ENCODE measurements at regions of chr9 and their contacts with region 1.

Region 1: GRCh38 chr9:131656356-131657036 is 83.4 kb downstream of the RAPGEF1 start:
- DNase-seq: peak; percentile 53 to 90 (median 71)
- ATAC-seq: peak; percentile 84
- H3K4me3 ChIP-seq: no peak overlapping the region
- H3K4me3 Mint-ChIP-seq: peak overlapping the region; percentile 46
- H3K27ac ChIP-seq: peak overlapping the region; percentile 16 to 73
- H3K27ac Mint-ChIP-seq: peak overlapping the region; percentile 96
- H3K4me1 ChIP-seq: peaks cover 33% of the 10 kb centered on the region
- H3K4me1 Mint-ChIP-seq: peaks cover 70% of the 10 kb centered on the region
- H3K27me3 ChIP-seq: no peaks in the 10 kb centered on the region
- H3K27me3 Mint-ChIP-seq: no peaks in the 10 kb centered on the region
- CTCF ChIP-seq: no peak

Region 2: GRCh38 chr9:131635285-131635684 is 21.2 kb before region 1 on chr9:
- CTCF ChIA-PET with region 1: interaction called, 3 read pairs
- POLR2A ChIA-PET with region 1: interaction called, 4 read pairs
- intact Hi-C with region 1: loop called in 1 of 2 experiments (anchors 1 kb)
- DNase-seq: peak; percentile 42 to 92 (median 76)
- ATAC-seq: peak; percentile 99
- H3K4me3 ChIP-seq: no peak overlapping the region
- H3K4me3 Mint-ChIP-seq: no peak overlapping the region
- H3K27ac ChIP-seq: peak overlapping the region in 1 of 2 experiments; percentile 74
- H3K27ac Mint-ChIP-seq: peak overlapping the region; percentile 89
- H3K4me1 ChIP-seq: peaks cover 16% of the 10 kb centered on the region
- H3K4me1 Mint-ChIP-seq: peaks cover 30% of the 10 kb centered on the region
- H3K27me3 ChIP-seq: no peaks in the 10 kb centered on the region
- H3K27me3 Mint-ChIP-seq: no peaks in the 10 kb centered on the region
- CTCF ChIP-seq: no peak

Region 3: GRCh38 chr9:131697097-131697496 is 40.6 kb after region 1 on chr9:
- CTCF ChIA-PET with region 1: no interaction called
- POLR2A ChIA-PET with region 1: no interaction called
- intact Hi-C with region 1: loop called in 1 of 2 experiments (anchors 5 kb)
- DNase-seq: no peak
- ATAC-seq: no peak
- H3K4me3 ChIP-seq: no peak overlapping the region
- H3K4me3 Mint-ChIP-seq: no peak overlapping the region
- H3K27ac ChIP-seq: no peak overlapping the region
- H3K27ac Mint-ChIP-seq: no peak overlapping the region
- H3K4me1 ChIP-seq: peaks cover 35% of the 10 kb centered on the region
- H3K4me1 Mint-ChIP-seq: peaks cover 84% of the 10 kb centered on the region
- H3K27me3 ChIP-seq: no peaks in the 10 kb centered on the region
- H3K27me3 Mint-ChIP-seq: no peaks in the 10 kb centered on the region
- CTCF ChIP-seq: no peak

Region 4: GRCh38 chr9:132411091-132411508 is 754.6 kb after region 1 on chr9:
- CTCF ChIA-PET with region 1: no interaction called
- POLR2A ChIA-PET with region 1: no interaction called
- intact Hi-C with region 1: no loop called
- DNase-seq: peak; percentile 39 to 85 (median 70)
- ATAC-seq: peak; percentile 70
- H3K4me3 ChIP-seq: peak overlapping the region; percentile 25 to 40
- H3K4me3 Mint-ChIP-seq: peak overlapping the region; percentile 75
- H3K27ac ChIP-seq: no peak overlapping the region
- H3K27ac Mint-ChIP-seq: no peak overlapping the region
- H3K4me1 ChIP-seq: peaks cover 34% of the 10 kb centered on the region
- H3K4me1 Mint-ChIP-seq: peaks cover 33% of the 10 kb centered on the region
- H3K27me3 ChIP-seq: peaks cover 16 to 17% of the 10 kb centered on the region in 2 experiments
- H3K27me3 Mint-ChIP-seq: peaks cover 50% of the 10 kb centered on the region
- CTCF ChIP-seq: peak; percentile 89